ENCODE measurements at regions of chr9 and their contacts with region 1.

Region 1: DNA sequence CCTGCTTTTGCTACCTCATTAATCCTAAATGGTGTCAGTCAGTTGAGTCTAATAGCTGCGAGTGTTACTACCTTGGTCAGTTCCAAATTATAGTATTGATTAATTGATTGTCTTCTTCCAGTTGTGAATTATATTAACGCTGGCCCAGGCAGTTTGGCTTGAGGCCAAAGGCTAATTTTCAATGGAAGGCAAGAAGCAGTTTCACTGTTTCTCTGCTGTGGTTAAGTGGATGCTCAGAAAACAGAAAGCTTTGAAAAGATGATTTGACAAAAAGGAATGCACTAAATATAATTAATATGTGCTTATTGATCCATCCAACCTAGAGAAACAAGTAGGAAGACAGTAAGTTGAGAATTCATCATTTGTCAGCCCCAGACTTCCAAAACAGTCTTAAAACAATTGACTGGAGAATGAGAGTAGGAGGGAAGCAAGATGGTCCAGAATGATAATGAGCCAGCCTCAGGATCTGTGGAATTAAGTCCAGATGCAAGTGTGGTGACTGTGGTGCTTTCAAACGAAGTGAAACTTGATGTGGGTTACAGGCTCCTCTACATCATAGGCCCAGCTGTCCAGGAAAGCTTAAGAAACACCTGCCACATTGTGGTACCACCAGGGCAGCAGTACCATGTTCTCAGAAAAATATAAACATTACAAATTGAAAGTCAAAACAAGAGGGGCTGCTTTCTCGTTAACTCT is 1371.0 kb upstream of the DMAC1 start:
- DNase-seq: no peak
- H3K27ac ChIP-seq: no peak overlapping the region
- CTCF ChIP-seq: no peak

Region 2: GRCh38 chr9:8895861-8896224 is 274.7 kb before region 1 on chr9:
- CTCF ChIA-PET with region 1: no interaction called
- POLR2A ChIA-PET with region 1: no interaction called
- DNase-seq: no peak
- H3K27ac ChIP-seq: no peak overlapping the region
- CTCF ChIP-seq: peak; percentile 60

Region 3: GRCh38 chr9:8978334-8978733 is 192.3 kb before region 1 on chr9:
- CTCF ChIA-PET with region 1: interaction called, 10 read pairs
- POLR2A ChIA-PET with region 1: no interaction called
- DNase-seq: no peak
- H3K27ac ChIP-seq: no peak overlapping the region
- CTCF ChIP-seq: no peak

Measured in RWPE1 (cell line).